Adrenal gland (tissue), 19 donors: ENCODE measurements at regions of chr12 and their contacts with region 1.

Region 1: GRCh38 chr12:54958048-54958658 is 26.4 kb downstream of the TESPA1 start:
- DNase-seq: peak; percentile 26 to 61 (median 54)
- H3K4me3 ChIP-seq: no peak overlapping the region
- H3K27ac ChIP-seq: no peak overlapping the region
- H3K4me1 ChIP-seq: no peaks in the 10 kb centered on the region
- H3K27me3 ChIP-seq: peaks cover 6% of the 10 kb centered on the region
- CTCF ChIP-seq: peak; percentile 47 to 81 (median 74)
- POLR2A ChIP-seq: no peak

Region 2: GRCh38 chr12:54596526-54596946 is 361.6 kb before region 1 on chr12:
- intact Hi-C with region 1: loop called (anchors 5 to 10 kb)
- DNase-seq: peak; percentile 42 to 84 (median 73)
- H3K4me3 ChIP-seq: no peak overlapping the region
- H3K27ac ChIP-seq: no peak overlapping the region
- H3K4me1 ChIP-seq: no peaks in the 10 kb centered on the region
- H3K27me3 ChIP-seq: peaks cover 6% of the 10 kb centered on the region
- CTCF ChIP-seq: peak; percentile 53 to 83 (median 62)
- POLR2A ChIP-seq: no peak

Region 3: DNA sequence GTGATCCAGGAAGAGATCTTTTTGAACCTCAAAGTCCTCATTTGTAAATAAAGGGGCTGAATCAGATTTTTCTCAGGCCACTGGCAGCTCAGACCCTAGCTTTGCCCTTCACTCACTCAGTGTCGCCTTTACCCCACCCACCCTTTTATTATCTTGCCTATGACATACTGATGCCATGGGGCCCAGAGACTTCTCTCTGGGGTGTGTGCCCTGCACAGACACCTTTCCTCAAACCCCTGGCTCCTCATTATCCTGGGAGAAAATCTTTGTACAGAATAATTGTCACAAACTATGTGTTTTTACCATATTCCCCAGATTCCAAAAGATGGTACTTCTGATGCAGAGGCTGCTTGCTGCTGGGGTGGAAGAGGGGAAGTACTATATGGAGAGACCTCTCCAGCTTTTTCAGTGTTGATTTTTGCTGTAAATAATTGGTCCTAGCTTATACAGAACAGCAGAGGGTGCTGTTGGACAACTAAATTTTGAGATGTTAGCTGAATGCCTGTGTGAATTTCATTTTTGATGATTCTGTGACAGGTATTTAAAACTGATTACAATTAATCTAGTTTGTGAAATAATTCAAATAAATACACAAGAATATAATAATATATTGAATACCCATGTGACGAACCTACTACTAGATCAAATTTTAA is 256.1 kb before region 1 on chr12:
- intact Hi-C with region 1: loop called in 1 of 2 experiments (anchors 5 kb)
- DNase-seq: peak in 1 of 7 donors; percentile 4
- H3K4me3 ChIP-seq: no peak overlapping the region
- H3K27ac ChIP-seq: no peak overlapping the region
- H3K4me1 ChIP-seq: no peaks in the 10 kb centered on the region
- H3K27me3 ChIP-seq: no peaks in the 10 kb centered on the region
- CTCF ChIP-seq: peak; percentile 36 to 66 (median 57)
- POLR2A ChIP-seq: no peak

Region 4: GRCh38 chr12:54749191-54749818 is 208.8 kb before region 1 on chr12:
- intact Hi-C with region 1: loop called in 1 of 2 experiments (anchors 5 kb)
- DNase-seq: peak in 5 of 7 donors; percentile 11 to 36 (median 23)
- H3K4me3 ChIP-seq: no peak overlapping the region
- H3K27ac ChIP-seq: no peak overlapping the region
- H3K4me1 ChIP-seq: no peaks in the 10 kb centered on the region
- H3K27me3 ChIP-seq: peaks cover 14% of the 10 kb centered on the region
- CTCF ChIP-seq: peak; percentile 58 to 75 (median 72)
- POLR2A ChIP-seq: no peak

Region 5: DNA sequence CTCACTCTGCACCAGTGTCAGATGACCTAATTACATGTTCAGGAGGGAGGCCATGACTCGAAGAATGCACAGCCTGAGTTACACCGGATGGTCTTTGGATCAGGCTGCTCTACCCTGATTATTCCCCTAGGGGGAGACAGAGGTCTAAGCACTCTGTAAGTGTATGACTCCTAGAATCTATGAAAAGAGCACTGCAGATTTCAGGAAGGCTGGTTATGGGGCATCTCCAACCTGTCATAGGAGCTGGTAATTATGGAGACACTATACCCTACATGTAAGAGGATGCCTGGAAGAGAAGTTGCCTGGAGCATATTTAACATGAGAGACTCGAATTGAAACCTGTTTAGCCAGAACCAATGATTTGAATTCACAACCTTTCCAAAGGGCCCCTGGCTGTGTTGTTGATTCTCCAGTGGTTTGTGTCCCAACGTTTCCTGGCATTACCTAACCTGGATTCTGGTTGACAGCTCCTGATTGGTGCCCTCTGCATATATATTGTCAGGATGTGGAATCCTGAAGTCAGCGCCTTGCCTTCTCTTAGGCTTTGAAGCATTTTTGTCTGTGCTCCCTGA is 104.1 kb before region 1 on chr12 and contains the start of gene MUCL1:
- intact Hi-C with region 1: loop called (anchors 10 kb)
- DNase-seq: peak; percentile 47 to 79 (median 60)
- H3K4me3 ChIP-seq: no peak within 1 kb of the TSS
- H3K27ac ChIP-seq: no peak within 1 kb of the TSS
- H3K4me1 ChIP-seq: no peaks in the 10 kb centered on the region
- H3K27me3 ChIP-seq: no peaks in the 10 kb centered on the region
- CTCF ChIP-seq: peak; percentile 53 to 80 (median 62)
- POLR2A ChIP-seq: no peak
- total RNA-seq, gene MUCL1: 0.83 to 0.88 TPM in 2 of 9 donors, not detected in the others